Activated CD4-positive, alpha-beta T cell treated with anti-CD3 and anti-CD28 coated beads, Interleukin-2, amount 10 ng/mL, durations not matched to agents 24 days and 14 days (primary cell): ENCODE measurements at regions of chr6 and their contacts with region 1.

Region 1: DNA sequence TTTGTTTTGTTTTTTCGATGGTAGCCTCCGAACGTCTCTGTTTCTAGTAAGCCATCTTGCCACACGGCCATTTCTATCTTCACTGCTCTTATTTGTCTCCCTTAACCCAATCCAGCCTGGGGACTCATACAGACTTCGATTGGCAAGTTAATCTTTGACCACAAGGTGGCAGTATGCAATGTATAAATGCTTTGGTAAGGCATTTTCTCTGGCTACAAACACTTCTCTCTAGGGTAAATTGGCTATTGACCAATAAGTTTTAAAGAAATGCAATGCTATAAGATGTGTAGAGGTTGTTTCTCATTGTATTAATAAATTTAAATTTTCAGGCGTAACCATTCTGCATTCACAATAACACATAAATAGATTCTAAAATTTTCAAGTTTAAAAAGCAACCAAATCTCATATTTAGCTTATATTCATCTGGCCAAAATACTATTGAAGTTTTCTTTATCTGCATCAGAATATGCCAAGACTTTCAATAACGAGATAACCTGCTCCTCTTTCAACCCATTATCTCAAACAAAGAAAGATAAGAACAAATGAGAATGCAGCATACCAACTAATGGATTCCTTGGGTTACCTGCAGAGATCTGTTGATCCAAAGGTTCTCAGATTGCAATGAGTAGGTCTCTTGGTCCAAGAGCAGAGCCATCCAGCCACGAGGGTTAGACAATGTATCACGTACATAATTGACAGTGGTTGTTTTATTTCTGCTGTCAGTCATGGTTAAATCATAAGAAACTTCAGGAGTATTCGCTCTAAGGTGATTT is 231.9 kb downstream of the PKHD1 start:
- DNase-seq: peak; percentile 77
- H3K4me3 Mint-ChIP-seq: no peak overlapping the region
- H3K27ac Mint-ChIP-seq: no peak overlapping the region
- H3K4me1 Mint-ChIP-seq: no peaks in the 10 kb centered on the region
- H3K27me3 Mint-ChIP-seq: no peaks in the 10 kb centered on the region

Region 2: DNA sequence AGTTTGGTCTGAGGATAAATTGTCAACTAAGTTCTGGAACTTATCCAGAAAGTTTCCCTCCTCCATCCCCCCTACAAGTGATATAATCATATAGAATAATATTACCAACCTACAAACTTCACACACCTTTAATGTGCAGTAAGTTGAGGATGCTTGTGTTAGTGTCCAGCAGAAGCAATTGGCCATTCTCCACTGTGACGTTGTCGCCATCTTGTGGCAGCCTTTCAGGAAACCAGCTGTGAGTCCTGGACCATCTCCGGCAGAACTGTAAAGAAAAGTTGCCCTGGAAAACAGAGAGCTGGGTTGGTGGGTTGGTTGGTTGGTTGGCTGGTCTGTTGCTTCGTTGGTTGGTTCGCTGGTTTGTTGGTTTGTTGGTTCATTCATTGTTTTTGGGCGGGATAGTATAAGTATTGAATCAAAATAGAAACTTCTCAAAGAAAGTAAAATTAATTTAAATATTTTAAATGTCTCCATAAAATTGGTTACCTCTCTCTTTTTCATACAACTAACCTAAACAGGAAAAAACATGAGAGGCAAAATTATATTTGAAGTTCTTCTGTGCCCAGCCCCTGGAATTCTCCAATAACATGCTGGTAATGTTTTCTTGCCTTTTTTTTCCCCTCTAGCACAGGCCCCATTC is 104.4 kb after region 1 on chr6:
- intact Hi-C with region 1: loop called (anchors 10 kb)
- DNase-seq: peak; percentile 81
- H3K4me3 Mint-ChIP-seq: no peak overlapping the region
- H3K27ac Mint-ChIP-seq: no peak overlapping the region
- H3K4me1 Mint-ChIP-seq: peaks cover 1% of the 10 kb centered on the region
- H3K27me3 Mint-ChIP-seq: peaks cover 3% of the 10 kb centered on the region

Region 3: DNA sequence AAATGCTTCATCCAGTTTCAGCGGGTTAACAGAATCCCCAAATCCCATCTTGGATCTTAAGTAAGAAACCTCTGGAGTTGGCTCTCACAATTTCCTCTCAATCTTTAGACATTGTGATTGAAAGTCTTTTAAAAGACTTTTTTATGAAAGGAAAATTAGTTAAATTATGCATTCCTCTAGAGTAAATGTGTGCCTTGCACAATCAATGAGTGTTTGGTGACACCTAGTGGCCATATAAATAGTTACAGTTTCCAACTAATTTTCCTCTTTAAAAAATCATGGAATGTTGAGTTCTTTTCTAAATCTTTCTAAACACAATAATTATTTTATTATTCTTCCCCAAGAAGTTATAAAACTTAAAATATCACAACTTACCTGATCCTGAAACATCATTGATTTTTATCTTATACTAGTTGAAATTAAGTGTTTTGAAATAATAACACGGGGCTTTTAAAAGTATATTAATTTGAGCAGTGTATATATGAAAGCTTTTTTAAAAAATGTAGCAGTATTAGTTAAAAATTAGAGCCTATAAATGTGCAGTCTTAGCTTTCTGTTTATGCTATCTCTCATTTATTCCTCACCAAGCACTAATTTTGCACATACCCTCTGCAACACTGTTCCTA is 165.6 kb after region 1 on chr6:
- intact Hi-C with region 1: loop called (anchors 1 kb)
- DNase-seq: peak; percentile 49
- H3K4me3 Mint-ChIP-seq: no peak overlapping the region
- H3K27ac Mint-ChIP-seq: no peak overlapping the region
- H3K4me1 Mint-ChIP-seq: no peaks in the 10 kb centered on the region
- H3K27me3 Mint-ChIP-seq: peaks cover 10% of the 10 kb centered on the region